ENCODE measurements at regions of chr7 and their contacts with region 1.

Region 1: DNA sequence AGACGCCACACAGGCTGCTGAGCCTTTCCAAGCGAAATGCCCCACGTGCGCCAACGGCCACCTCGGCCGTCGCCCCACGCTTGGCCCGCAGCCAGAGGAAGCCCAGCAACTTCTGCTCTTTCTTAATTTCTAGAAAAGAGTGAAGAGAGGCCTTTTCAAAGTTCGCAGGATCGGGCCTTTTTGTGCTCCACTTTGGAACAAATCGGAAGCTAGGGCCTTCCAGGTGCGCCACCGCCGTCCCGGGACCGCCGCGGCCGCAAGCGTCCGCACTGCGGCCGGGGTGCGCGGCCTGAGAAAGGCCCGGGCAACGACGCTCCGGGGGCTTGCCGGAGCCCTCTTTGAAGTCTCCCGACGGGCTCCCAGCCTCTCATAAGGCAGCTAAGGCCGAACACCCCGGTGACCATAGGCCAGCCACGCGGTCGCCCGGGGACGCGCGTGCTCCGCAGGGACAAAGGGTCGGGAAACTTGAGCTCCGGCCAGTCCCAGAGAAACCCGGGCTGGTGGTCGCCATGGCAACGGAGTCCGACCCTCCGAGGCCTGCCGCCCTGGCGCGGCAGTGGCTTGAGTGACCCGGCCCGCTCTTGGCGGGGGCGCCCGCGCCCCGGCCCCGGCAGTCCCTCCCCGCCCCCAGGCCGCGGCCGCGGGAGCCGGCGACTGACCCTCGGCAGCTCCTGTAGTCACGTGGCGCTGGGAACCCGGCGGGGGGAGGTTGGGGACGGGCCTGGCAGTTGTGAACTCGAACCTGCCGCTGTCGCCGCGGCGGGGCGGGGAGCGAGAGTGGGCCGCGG is at the start of gene REPIN1:
- DNase-seq: peak; percentile 79
- ATAC-seq: peak; percentile 68
- H3K4me3 ChIP-seq: peak within 1 kb of the TSS; percentile 81
- H3K27ac ChIP-seq: peak within 1 kb of the TSS; percentile 85
- H3K4me1 ChIP-seq: peaks cover 18% of the 10 kb centered on the region
- H3K27me3 ChIP-seq: no peaks in the 10 kb centered on the region
- CTCF ChIP-seq: no peak
- POLR2A ChIP-seq: no peak
- RAD21 ChIP-seq: no peak
- total RNA-seq, gene REPIN1: 19.4 and 20.6 TPM in 2 replicates

Region 2: DNA sequence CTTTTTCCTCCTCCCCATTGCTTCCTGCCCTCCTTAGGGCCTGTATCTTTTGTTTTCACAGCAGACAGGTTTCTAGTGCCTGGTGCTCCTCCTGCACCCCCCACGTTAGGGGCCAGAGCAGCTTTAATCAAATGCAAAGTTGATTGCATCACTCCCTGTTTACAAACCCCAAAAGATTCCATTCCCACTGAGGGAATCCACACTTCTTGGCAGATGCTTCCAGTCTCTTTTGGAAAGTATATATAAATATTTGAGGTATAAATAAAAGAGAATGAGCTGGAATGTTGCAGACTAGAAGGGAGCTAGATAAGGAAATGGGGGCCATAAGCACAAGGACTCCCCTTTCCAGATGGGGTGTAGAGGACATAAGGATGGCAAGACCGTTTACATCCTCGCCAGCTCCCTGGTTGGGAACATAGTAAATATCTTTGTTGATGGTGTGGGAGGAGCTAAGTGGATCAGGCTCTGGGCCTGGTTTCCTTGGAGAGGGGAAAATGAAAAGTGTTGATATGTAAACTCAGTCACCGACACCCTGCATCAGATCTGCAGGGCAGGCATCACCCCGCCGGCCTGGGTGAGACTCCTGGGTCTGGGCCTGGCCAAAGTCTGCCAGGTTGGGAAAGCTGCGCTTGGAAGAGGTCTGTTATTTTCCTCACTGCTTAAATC is 33.0 kb before region 1 on chr7:
- CTCF ChIA-PET with region 1: interaction called, 3 read pairs
- POLR2A ChIA-PET with region 1: interaction called, 6 read pairs
- dilution Hi-C with region 1: no loop called
- in situ Hi-C with region 1: no loop called
- intact Hi-C with region 1: loop called (anchors 1 kb)
- DNase-seq: peak; percentile 89
- ATAC-seq: peak; percentile 76
- H3K4me3 ChIP-seq: no peak overlapping the region
- H3K27ac ChIP-seq: peak overlapping the region; percentile 87; the same call in 1 of the 2 replicates
- H3K4me1 ChIP-seq: peaks cover 26% of the 10 kb centered on the region
- H3K27me3 ChIP-seq: no peaks in the 10 kb centered on the region
- CTCF ChIP-seq: no peak
- POLR2A ChIP-seq: no peak
- RAD21 ChIP-seq: no peak

Region 3: DNA sequence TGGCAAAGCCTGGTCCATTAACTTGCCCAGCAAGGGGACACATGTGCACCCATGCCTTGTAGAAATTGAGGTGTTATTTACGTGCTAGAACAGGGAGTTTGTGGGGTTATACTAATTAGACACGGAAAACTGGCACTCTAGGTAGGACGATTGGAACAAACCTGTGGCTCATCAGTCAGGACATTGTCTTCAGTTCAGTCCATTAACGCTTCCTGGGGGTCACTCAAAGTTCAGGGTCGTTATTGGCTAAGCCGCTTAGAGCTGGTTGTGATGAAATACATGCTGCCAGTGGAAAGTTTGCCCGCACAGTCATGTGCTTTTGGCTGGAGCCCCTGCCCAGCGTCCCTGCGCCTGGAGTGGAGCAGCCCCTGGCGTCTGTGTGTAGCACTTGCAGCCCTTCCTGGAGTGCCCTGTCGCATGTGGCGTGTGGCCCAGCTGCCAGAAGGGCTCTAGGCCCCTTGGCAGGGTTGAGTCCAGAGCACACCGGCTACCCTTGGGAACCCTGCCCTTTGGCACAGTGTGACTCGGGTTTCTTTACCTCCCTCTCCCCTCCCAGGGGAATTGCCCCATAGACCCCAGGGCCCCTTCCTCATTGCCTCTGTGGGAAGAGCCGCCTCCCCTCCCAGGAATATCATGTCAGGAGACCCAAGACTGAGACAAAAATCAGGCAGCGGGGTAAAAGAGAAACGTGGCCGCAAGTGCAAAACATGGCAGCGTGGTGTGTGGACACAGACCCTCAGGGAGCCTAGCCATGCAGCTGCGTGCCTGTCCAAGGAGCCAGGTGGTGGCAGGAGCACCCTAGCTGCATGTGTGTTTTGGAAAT is 20.6 kb after region 1 on chr7:
- CTCF ChIA-PET with region 1: interaction called, 3 read pairs
- POLR2A ChIA-PET with region 1: interaction called, 20 read pairs
- dilution Hi-C with region 1: no loop called
- in situ Hi-C with region 1: no loop called
- intact Hi-C with region 1: no loop called
- DNase-seq: peak; percentile 65
- ATAC-seq: peak; percentile 83
- H3K4me3 ChIP-seq: no peak overlapping the region
- H3K27ac ChIP-seq: no peak overlapping the region; the same call in 1 of the 2 replicates
- H3K4me1 ChIP-seq: peaks cover 9% of the 10 kb centered on the region; the same call in 1 of the 2 replicates
- H3K27me3 ChIP-seq: no peaks in the 10 kb centered on the region
- CTCF ChIP-seq: peak; percentile 61
- POLR2A ChIP-seq: no peak
- RAD21 ChIP-seq: peak; percentile 69

Region 4: GRCh38 chr7:150737265-150738055 is 369.2 kb after region 1 on chr7 and contains the start of gene GIMAP5:
- CTCF ChIA-PET with region 1: no interaction called
- POLR2A ChIA-PET with region 1: no interaction called
- dilution Hi-C with region 1: no loop called
- in situ Hi-C with region 1: no loop called
- intact Hi-C with region 1: no loop called
- DNase-seq: no peak
- ATAC-seq: no peak
- H3K4me3 ChIP-seq: no peak within 1 kb of the TSS
- H3K27ac ChIP-seq: no peak within 1 kb of the TSS
- H3K4me1 ChIP-seq: no peaks in the 10 kb centered on the region
- H3K27me3 ChIP-seq: no peaks in the 10 kb centered on the region; the same call in 1 of the 2 replicates
- CTCF ChIP-seq: no peak
- POLR2A ChIP-seq: no peak
- RAD21 ChIP-seq: no peak
- total RNA-seq, gene GIMAP5: not detected in 2 replicates

Region 5: GRCh38 chr7:150766334-150766709 is 398.0 kb after region 1 on chr7:
- CTCF ChIA-PET with region 1: no interaction called
- POLR2A ChIA-PET with region 1: no interaction called
- dilution Hi-C with region 1: no loop called
- in situ Hi-C with region 1: no loop called
- intact Hi-C with region 1: no loop called
- DNase-seq: no peak
- ATAC-seq: no peak
- H3K4me3 ChIP-seq: no peak overlapping the region
- H3K27ac ChIP-seq: no peak overlapping the region
- H3K4me1 ChIP-seq: no peaks in the 10 kb centered on the region
- H3K27me3 ChIP-seq: no peaks in the 10 kb centered on the region
- CTCF ChIP-seq: no peak
- POLR2A ChIP-seq: no peak
- RAD21 ChIP-seq: no peak